Heart left ventricle (tissue), 16 donors: ENCODE measurements at regions of chr12 and their contacts with region 1.

Region 1: GRCh38 chr12:96985480-96986362 is 78.7 kb downstream of the NEDD1 start:
- DNase-seq: peak in 2 of 5 donors; percentile 16 to 60
- ATAC-seq: peak in 2 of 4 donors; percentile 52 to 58
- H3K4me3 ChIP-seq: peak overlapping the region in 11 of 12 donors; percentile 18 to 62 (median 43)
- H3K27ac ChIP-seq: no peak overlapping the region
- H3K4me1 ChIP-seq: peaks cover 0 to 10% (median 6%) of the 10 kb centered on the region in 12 donors
- H3K27me3 ChIP-seq: peaks cover 0 to 30% (median 12%) of the 10 kb centered on the region in 9 donors
- CTCF ChIP-seq: peak; percentile 56 to 88 (median 74)
- POLR2A ChIP-seq: no peak

Region 2: GRCh38 chr12:96578526-96579125 is 407.1 kb before region 1 on chr12:
- intact Hi-C with region 1: loop called in 9 of 10 experiments (anchors 5 to 10 kb)
- DNase-seq: no peak
- ATAC-seq: peak in 3 of 4 donors; percentile 48 to 63 (median 48)
- H3K4me3 ChIP-seq: no peak overlapping the region
- H3K27ac ChIP-seq: no peak overlapping the region
- H3K4me1 ChIP-seq: no peaks in the 10 kb centered on the region
- H3K27me3 ChIP-seq: no peaks in the 10 kb centered on the region
- CTCF ChIP-seq: peak; percentile 43 to 72 (median 60)
- POLR2A ChIP-seq: no peak

Region 3: GRCh38 chr12:96587691-96588090 is 398.0 kb before region 1 on chr12:
- intact Hi-C with region 1: loop called in 5 of 10 experiments (anchors 5 to 10 kb)
- DNase-seq: no peak
- ATAC-seq: no peak
- H3K4me3 ChIP-seq: no peak overlapping the region
- H3K27ac ChIP-seq: no peak overlapping the region
- H3K4me1 ChIP-seq: no peaks in the 10 kb centered on the region
- H3K27me3 ChIP-seq: no peaks in the 10 kb centered on the region
- CTCF ChIP-seq: no peak
- POLR2A ChIP-seq: no peak

Region 4: DNA sequence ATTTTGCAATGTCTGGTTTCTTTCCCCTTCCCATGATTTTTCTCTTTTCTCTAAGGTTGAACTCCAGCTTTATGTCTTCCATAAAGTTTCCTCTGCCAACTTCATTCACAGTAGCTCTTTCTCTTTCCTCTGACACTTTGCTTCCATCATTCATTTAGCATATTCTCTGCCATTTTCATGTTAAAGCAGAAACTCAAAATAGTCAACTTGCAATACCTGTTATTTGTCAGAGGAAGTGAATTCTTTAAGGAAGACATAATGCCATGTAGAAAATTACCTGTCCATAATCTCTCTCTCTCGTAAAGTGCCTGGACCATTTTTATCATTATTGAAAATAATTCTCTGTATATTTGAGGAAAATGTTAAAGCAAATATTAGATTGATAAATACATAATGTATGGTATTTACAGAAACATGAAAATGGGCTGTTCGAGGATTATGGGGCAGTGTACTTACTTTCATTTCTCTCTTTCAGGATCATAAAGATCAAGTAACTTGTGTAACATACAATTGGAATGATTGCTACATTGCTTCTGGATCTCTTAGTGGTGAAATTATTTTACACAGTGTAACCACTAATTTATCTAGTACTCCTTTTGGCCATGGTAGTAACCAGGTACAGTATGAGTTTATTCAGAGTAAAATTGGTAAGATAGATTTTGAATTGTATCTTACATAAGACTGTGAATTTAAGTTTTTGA is 66.1 kb before region 1 on chr12:
- intact Hi-C with region 1: no loop called
- DNase-seq: no peak
- ATAC-seq: no peak
- H3K4me3 ChIP-seq: no peak overlapping the region
- H3K27ac ChIP-seq: no peak overlapping the region
- H3K4me1 ChIP-seq: no peaks in the 10 kb centered on the region
- H3K27me3 ChIP-seq: no peaks in the 10 kb centered on the region
- CTCF ChIP-seq: no peak
- POLR2A ChIP-seq: no peak

Region 5: GRCh38 chr12:97308576-97309198 is 323.0 kb after region 1 on chr12:
- intact Hi-C with region 1: loop called in 6 of 10 experiments (anchors 5 kb)
- DNase-seq: no peak
- ATAC-seq: no peak
- H3K4me3 ChIP-seq: no peak overlapping the region
- H3K27ac ChIP-seq: no peak overlapping the region
- H3K4me1 ChIP-seq: peaks cover 0 to 10% (median 0%) of the 10 kb centered on the region in 12 donors
- H3K27me3 ChIP-seq: peaks cover 0 to 6% (median 0%) of the 10 kb centered on the region in 9 donors
- CTCF ChIP-seq: peak; percentile 50 to 81 (median 73)
- POLR2A ChIP-seq: no peak

Region 6: DNA sequence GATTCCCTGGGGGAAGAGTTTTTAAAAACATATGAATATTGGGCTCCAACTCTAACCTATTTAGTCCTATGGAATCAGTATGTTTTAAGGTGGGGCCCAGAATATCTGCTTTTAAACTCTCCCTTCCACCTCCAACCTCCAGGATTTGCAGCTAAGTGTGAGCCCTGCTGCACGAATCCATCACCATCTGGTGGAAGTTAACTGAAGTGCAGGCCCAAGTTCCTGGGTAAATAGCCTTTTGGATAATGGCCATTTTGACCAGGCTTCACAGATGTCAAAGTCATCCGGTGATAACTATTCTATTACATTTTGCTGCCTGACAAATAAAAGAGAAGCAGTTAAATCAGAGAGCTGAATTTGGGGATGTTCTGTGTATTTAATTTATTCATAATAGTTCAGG is 418.8 kb after region 1 on chr12:
- intact Hi-C with region 1: loop called in 1 of 10 experiments (anchors 5 kb)
- DNase-seq: no peak
- ATAC-seq: peak in 1 of 4 donors; percentile 56
- H3K4me3 ChIP-seq: no peak overlapping the region
- H3K27ac ChIP-seq: no peak overlapping the region
- H3K4me1 ChIP-seq: no peaks in the 10 kb centered on the region
- H3K27me3 ChIP-seq: no peaks in the 10 kb centered on the region
- CTCF ChIP-seq: peak; percentile 40 to 72 (median 56)
- POLR2A ChIP-seq: no peak

Region 7: GRCh38 chr12:98397316-98398105 is 1411.8 kb after region 1 on chr12:
- intact Hi-C with region 1: loop called in 7 of 10 experiments (anchors 2 to 10 kb)
- DNase-seq: peak; percentile 71 to 88 (median 80)
- ATAC-seq: peak; percentile 89 to 97 (median 96)
- H3K4me3 ChIP-seq: peak overlapping the region in 10 of 12 donors; percentile 32 to 57 (median 47)
- H3K27ac ChIP-seq: peak overlapping the region in 2 of 12 donors; percentile 2 to 31
- H3K4me1 ChIP-seq: peaks cover 0 to 22% (median 2%) of the 10 kb centered on the region in 12 donors
- H3K27me3 ChIP-seq: no peaks in the 10 kb centered on the region
- CTCF ChIP-seq: peak; percentile 83 to 95 (median 90)
- POLR2A ChIP-seq: no peak